Spleen (tissue), 13 donors: ENCODE measurements at regions of chr1 and their contacts with region 1.

Region 1: GRCh38 chr1:112882271-112882744 is 73.7 kb downstream of the SLC16A1 start:
- DNase-seq: no peak
- H3K4me3 ChIP-seq: no peak overlapping the region
- H3K27ac ChIP-seq: peak overlapping the region in 4 of 8 donors; percentile 3 to 57 (median 38)
- H3K4me1 ChIP-seq: peaks cover 0 to 16% (median 0%) of the 10 kb centered on the region in 6 donors
- H3K27me3 ChIP-seq: no peaks in the 10 kb centered on the region
- CTCF ChIP-seq: no peak
- POLR2A ChIP-seq: no peak

Region 2: DNA sequence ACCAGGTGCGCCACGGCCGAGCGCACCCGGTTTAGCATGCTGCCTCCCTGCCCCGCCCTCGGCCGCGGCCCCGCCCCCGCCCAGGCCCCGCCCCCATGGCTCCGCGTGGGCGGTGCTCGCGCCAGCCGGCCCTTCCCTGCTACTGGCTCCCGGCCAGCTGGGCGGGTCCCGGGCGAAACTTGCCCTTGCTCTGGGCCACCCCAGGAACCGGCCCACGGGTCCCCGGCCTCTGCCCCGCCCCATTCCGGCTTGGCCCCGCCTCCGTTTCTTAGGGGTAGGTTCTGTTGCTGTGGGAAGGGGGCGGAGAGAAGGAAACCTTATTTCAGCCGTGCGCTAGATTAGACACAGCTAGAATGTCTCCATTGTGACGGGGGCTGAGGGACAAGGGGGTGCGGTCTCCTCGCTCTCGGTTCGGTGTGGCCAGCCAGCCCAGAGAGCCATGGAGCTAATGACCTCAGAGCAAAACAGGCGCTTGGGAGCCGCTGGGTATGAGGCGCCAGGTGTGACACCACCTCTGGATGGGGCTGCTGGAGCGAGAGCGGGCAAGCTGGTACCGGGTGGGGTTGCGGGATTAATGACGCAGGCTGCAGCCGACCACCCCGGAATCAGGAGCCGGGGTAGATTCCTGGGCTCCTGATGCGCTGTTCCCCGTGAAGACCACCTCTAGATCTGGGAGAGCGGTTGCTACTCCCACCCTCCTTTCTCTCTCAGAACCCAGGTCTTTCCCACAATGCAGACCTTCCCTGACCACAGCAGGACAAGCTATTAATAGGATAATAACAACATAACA is 166.8 kb before region 1 on chr1 and contains the start of gene PPM1J:
- intact Hi-C with region 1: no loop called
- DNase-seq: peak; percentile 100
- H3K4me3 ChIP-seq: peak within 1 kb of the TSS; percentile 42 to 76 (median 61)
- H3K27ac ChIP-seq: peak within 1 kb of the TSS; percentile 5 to 78 (median 72)
- H3K4me1 ChIP-seq: peaks cover 13 to 54% (median 37%) of the 10 kb centered on the region in 6 donors
- H3K27me3 ChIP-seq: peaks cover 0 to 30% (median 0%) of the 10 kb centered on the region in 7 donors
- CTCF ChIP-seq: peak in 4 of 11 experiments; percentile 4 to 22 (median 16)
- POLR2A ChIP-seq: peak in 1 of 3 donors; percentile 39
- total RNA-seq, gene PPM1J: 0.51 to 1.8 (median 1.3) TPM

Region 3: GRCh38 chr1:113007706-113008364 is 125.5 kb after region 1 on chr1:
- intact Hi-C with region 1: no loop called
- DNase-seq: no peak
- H3K4me3 ChIP-seq: no peak overlapping the region
- H3K27ac ChIP-seq: no peak overlapping the region
- H3K4me1 ChIP-seq: no peaks in the 10 kb centered on the region
- H3K27me3 ChIP-seq: no peaks in the 10 kb centered on the region
- CTCF ChIP-seq: no peak
- POLR2A ChIP-seq: no peak

Region 4: DNA sequence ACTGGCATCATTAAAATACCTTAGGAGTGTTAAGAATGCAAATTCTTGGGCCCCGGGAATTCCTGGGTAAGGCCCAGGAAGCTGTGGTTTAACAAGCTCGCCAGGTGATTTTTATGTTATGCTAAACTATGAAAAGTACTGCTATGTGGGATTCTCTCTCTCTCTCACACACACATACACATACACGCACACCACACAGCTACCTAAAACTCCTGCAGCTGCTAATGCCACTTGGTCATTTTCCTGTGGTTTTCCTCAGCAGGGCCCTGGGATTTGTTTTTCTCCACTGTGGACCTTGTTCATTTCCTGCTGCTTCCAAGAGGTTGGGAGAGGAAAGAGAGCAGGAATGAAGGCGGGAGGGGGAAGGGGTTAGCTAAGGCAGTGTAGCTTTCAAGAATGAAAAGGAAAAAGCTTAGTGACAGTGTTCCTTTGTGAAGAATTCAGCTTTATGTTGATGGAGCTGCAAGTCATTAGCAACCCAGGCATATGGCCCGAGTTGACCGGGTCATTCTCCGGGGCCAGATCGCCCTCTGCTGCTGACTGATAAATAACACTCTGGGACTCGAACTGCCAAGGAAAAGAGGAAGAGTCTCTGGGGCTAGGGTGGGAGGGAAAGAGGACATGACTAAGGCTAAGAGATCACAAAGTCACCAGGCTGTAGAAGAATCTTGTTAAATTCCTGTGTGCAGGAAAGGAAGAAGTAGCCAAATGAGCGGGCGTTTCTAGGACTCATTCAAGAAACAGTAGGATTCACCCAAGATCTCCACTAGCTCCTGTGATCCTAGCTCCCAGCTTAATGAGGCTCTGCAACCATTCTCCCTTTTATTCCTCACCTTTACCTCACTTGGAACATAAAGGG is 160.2 kb after region 1 on chr1:
- intact Hi-C with region 1: loop called (anchors 10 kb)
- DNase-seq: peak; percentile 85
- H3K4me3 ChIP-seq: no peak overlapping the region
- H3K27ac ChIP-seq: peak overlapping the region in 7 of 8 donors; percentile 4 to 64 (median 61)
- H3K4me1 ChIP-seq: peaks cover 4 to 43% (median 27%) of the 10 kb centered on the region in 6 donors
- H3K27me3 ChIP-seq: no peaks in the 10 kb centered on the region
- CTCF ChIP-seq: peak in 10 of 11 experiments; percentile 22 to 67 (median 58)
- POLR2A ChIP-seq: no peak

Region 5: DNA sequence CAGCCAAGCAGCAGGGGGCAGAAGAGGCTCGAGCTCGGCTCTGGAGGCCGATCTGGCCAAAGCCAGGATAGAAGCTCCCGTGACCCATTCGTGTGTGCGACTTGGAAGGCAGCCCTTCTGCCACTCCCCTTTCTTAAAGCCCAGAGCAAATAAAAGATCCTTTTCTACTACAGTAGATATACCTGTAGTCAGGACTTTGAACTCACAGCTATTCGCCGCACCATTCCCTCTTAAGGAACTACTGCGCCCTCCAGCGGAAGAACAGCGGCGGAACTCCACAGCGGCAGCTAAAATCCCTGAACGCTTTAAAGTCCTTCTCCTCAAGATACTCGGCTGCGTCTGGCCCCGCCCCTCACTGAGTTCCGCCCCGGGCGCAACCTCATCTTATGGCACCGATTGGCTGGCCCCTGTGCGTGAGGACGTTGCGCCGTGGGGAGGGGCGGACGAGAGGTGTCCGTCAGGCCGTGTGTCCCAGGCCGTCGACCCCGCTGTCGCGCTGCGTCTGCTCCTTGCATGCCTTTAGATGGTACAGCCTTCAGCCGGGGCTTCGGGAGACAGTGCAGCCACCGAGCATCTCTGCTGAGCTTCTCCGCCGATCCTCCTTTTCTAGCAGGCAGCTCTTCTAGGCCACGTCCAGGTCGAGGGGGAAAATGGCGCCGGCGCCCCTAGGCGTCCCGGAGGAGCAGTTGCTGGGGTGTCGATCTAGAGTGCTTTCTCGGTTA is 190.6 kb after region 1 on chr1 and contains the start of gene LRIG2:
- intact Hi-C with region 1: loop called (anchors 10 kb)
- DNase-seq: peak; percentile 99
- H3K4me3 ChIP-seq: peak within 1 kb of the TSS; percentile 68 to 91 (median 84)
- H3K27ac ChIP-seq: peak within 1 kb of the TSS; percentile 87 to 93 (median 91)
- H3K4me1 ChIP-seq: peaks cover 14 to 52% (median 38%) of the 10 kb centered on the region in 6 donors
- H3K27me3 ChIP-seq: no peaks in the 10 kb centered on the region
- CTCF ChIP-seq: peak; percentile 79 to 95 (median 90)
- POLR2A ChIP-seq: peak in 2 of 3 donors; percentile 7 to 60
- total RNA-seq, gene LRIG2: 20.7 to 68.7 (median 23.7) TPM